A673 (cell line): ENCODE measurements at regions of chr10 and their contacts with region 1.

Region 1: GRCh38 chr10:110007701-110008517 is at the start of gene ADD3:
- DNase-seq: peak; percentile 99
- H3K4me3 ChIP-seq: peak within 1 kb of the TSS; percentile 95
- H3K27ac ChIP-seq: peak within 1 kb of the TSS; percentile 89
- H3K4me1 ChIP-seq: peaks cover 43% of the 10 kb centered on the region
- H3K27me3 ChIP-seq: no peaks in the 10 kb centered on the region
- CTCF ChIP-seq: no peak
- total RNA-seq, gene ADD3: 80.5 and 82.9 TPM in 2 replicates

Region 2: GRCh38 chr10:110081911-110082310 is 74.0 kb after region 1 on chr10:
- CTCF ChIA-PET with region 1: no interaction called
- POLR2A ChIA-PET with region 1: no interaction called
- intact Hi-C with region 1: loop called (anchors 5 kb)
- DNase-seq: peak; percentile 95
- H3K4me3 ChIP-seq: no peak overlapping the region
- H3K27ac ChIP-seq: peak overlapping the region; percentile 82
- H3K4me1 ChIP-seq: peaks cover 75% of the 10 kb centered on the region
- H3K27me3 ChIP-seq: no peaks in the 10 kb centered on the region
- CTCF ChIP-seq: no peak

Region 3: DNA sequence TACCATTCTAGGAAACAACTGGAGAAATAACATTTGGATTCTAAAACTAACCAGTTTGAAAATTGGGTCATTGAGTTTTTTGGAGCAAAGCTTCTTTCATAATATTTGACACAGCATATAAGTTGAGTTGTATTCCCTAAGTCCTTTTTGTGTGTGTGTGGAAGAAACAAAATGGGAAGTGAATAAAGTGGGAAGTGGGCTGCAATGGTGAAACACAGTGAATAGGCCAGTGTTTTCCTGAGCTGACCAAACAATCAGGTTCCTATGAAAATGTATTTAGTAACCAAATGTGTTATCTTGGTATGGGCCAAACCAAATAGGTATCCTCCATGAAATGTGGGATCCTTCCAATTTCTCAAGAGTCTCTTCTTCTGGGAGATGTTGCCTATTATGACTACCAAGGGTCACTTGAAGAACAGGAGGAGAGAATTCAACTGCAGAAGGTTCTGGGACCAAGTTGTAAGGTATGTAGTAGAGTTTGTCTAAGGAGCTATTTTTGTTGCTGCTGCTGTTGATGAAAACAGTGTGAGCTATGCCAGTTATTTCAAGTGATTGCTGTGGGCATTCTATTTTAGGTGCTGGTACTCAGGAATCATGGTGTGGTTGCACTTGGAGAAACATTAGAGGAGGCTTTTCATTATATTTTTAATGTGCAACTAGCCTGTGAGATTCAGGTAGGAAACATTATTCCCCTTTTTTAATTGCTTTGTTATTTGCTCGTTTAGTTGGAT is 111.1 kb after region 1 on chr10:
- CTCF ChIA-PET with region 1: no interaction called
- POLR2A ChIA-PET with region 1: no interaction called
- intact Hi-C with region 1: loop called (anchors 5 kb)
- DNase-seq: no peak
- H3K4me3 ChIP-seq: no peak overlapping the region
- H3K27ac ChIP-seq: no peak overlapping the region
- H3K4me1 ChIP-seq: no peaks in the 10 kb centered on the region
- H3K27me3 ChIP-seq: no peaks in the 10 kb centered on the region
- CTCF ChIP-seq: no peak

Region 4: GRCh38 chr10:110225756-110226542 is 218.0 kb after region 1 on chr10:
- CTCF ChIA-PET with region 1: no interaction called
- POLR2A ChIA-PET with region 1: no interaction called
- intact Hi-C with region 1: loop called (anchors 2 kb)
- DNase-seq: peak; percentile 97
- H3K4me3 ChIP-seq: peak overlapping the region; percentile 73
- H3K27ac ChIP-seq: peak overlapping the region; percentile 70
- H3K4me1 ChIP-seq: peaks cover 20% of the 10 kb centered on the region
- H3K27me3 ChIP-seq: no peaks in the 10 kb centered on the region
- CTCF ChIP-seq: peak; percentile 55

Region 5: DNA sequence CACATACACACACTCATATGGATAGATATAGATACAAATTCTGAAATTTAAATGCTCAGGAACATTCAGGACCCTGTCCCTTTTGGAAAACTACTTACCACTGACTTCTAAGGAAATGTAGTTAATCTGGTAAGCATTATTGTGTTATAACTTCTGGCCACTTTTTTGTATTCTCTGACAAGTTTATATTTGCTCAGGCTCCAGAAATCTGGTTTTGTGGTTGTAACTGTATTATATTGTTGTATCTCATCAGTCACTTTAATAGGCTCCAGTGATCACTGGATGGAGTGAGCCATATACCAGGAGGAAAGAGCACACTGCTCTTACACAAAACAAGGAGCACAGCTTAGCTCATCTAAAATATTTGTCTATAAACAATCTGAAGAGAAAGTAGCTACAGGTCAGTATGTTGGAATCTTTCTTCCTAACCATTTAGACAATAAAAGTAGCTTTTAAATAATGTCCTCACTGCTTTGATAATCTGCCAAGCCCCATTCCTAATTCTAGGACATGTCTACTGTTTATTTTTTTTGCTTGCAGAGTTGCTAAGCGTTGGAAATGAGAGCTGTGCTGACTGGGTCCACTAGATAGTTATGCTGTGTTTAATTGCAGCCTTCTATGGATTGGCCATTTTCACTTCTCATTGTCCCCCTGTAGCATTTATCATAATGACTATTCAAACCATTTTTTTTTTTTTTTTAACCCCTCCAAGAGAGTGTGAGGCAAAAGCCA is 253.0 kb after region 1 on chr10:
- CTCF ChIA-PET with region 1: interaction called, 12 read pairs
- POLR2A ChIA-PET with region 1: no interaction called
- intact Hi-C with region 1: no loop called
- DNase-seq: no peak
- H3K4me3 ChIP-seq: no peak overlapping the region
- H3K27ac ChIP-seq: no peak overlapping the region
- H3K4me1 ChIP-seq: no peaks in the 10 kb centered on the region
- H3K27me3 ChIP-seq: no peaks in the 10 kb centered on the region
- CTCF ChIP-seq: no peak